Heart right ventricle (tissue), 16 donors: ENCODE measurements at regions of chr5 and their contacts with region 1.

Region 1: GRCh38 chr5:78008356-78008967 is 232.3 kb upstream of the TBCA start:
- DNase-seq: no peak
- ATAC-seq: peak in 2 of 8 donors; percentile 52 to 59
- H3K4me3 ChIP-seq: no peak overlapping the region
- H3K27ac ChIP-seq: no peak overlapping the region
- H3K4me1 ChIP-seq: peaks cover 0 to 10% (median 0%) of the 10 kb centered on the region in 9 donors
- H3K27me3 ChIP-seq: no peaks in the 10 kb centered on the region
- CTCF ChIP-seq: peak; percentile 42 to 85 (median 70)

Region 2: GRCh38 chr5:77645158-77645994 is 363.1 kb before region 1 on chr5:
- intact Hi-C with region 1: loop called in 3 of 10 experiments (anchors 5 to 10 kb)
- DNase-seq: peak in 1 of 2 donors; percentile 47
- ATAC-seq: peak in 6 of 8 donors; percentile 52 to 94 (median 78)
- H3K4me3 ChIP-seq: peak overlapping the region in 7 of 10 donors; percentile 14 to 42 (median 28)
- H3K27ac ChIP-seq: no peak overlapping the region
- H3K4me1 ChIP-seq: peaks cover 4 to 28% (median 13%) of the 10 kb centered on the region in 9 donors
- H3K27me3 ChIP-seq: peaks cover 36 to 99% (median 87%) of the 10 kb centered on the region in 7 donors
- CTCF ChIP-seq: peak; percentile 34 to 69 (median 51)

Region 3: GRCh38 chr5:78280261-78280660 is 271.8 kb after region 1 on chr5:
- intact Hi-C with region 1: no loop called
- DNase-seq: no peak
- ATAC-seq: no peak
- H3K4me3 ChIP-seq: no peak overlapping the region
- H3K27ac ChIP-seq: no peak overlapping the region
- H3K4me1 ChIP-seq: peaks cover 0 to 20% (median 6%) of the 10 kb centered on the region in 9 donors
- H3K27me3 ChIP-seq: no peaks in the 10 kb centered on the region
- CTCF ChIP-seq: no peak